ENCODE measurements at regions of chr3 and their contacts with region 1.

Region 1: DNA sequence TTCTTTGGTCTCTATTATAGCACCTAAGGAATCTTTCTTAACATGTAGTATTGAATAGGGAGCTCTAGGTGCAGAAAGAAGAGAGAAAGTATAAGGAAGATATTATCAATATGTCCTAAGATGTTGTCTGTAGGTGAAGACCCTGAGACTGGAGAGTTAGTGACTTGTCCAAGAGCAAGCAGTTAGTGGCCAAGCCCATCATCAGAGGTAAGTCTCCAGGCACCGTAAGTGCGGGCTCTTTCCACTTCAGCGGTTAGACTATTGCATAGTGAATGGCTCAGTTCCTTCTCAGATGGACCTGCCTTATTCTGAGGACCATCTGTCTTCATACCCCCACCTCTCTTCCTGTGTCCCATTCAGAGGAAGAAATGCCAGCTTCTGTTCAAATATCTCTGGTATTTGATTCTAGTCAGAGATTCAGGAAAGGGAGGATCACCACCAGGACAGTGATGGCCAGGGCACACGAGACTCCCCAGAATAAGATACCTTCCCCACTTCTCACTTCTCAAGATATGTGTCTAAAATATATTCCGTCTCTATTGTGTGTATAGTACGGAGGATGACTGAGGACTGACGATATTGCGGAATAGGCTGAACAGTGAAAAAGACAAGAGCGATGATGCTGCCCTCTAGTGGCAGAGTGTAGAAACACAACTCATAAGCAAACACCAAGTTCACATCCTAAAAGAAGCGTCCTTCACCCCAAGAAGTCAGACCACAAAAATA is 19.1 kb upstream of the ADGRG7 start:
- DNase-seq: peak in 1 of 2 donors; percentile 58
- ATAC-seq: peak; percentile 53 to 87 (median 78)
- H3K4me3 ChIP-seq: peak overlapping the region in 1 of 10 donors; percentile 8
- H3K27ac ChIP-seq: no peak overlapping the region
- H3K4me1 ChIP-seq: peaks cover 0 to 5% (median 0%) of the 10 kb centered on the region in 9 donors
- H3K27me3 ChIP-seq: no peaks in the 10 kb centered on the region
- CTCF ChIP-seq: peak; percentile 78 to 96 (median 90)

Region 2: DNA sequence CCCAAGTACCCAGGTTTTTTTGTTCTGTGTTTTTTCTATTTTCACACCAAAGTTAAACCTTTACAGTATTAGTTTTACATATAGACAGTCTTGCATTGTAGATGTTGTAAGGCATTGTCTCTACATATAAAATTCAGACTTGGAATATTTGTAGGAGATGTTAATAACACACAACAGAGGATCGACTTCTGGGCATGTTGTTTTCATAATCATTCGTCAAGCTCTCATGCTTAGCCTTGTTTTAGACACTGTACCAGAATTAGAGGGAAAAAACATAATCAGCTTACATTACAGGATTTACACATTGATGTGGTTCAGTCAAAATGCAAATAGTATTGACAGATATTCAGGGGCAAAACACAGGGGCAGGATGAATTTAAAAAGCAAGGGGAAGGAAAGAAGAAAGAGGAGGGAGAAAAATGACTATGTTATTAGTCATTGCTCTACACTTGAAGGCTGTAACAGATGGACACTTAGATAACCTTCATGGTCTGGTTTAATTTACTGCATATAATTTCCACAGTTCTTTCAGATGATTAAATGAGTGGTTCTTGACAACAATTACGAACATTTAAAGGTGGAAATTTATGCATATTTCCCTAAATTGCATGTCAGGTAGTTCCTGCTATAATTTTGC is 765.2 kb before region 1 on chr3:
- intact Hi-C with region 1: loop called in 6 of 10 experiments (anchors 5 kb)
- DNase-seq: no peak
- ATAC-seq: no peak
- H3K4me3 ChIP-seq: no peak overlapping the region
- H3K27ac ChIP-seq: no peak overlapping the region
- H3K4me1 ChIP-seq: no peaks in the 10 kb centered on the region
- H3K27me3 ChIP-seq: no peaks in the 10 kb centered on the region
- CTCF ChIP-seq: no peak

Region 3: DNA sequence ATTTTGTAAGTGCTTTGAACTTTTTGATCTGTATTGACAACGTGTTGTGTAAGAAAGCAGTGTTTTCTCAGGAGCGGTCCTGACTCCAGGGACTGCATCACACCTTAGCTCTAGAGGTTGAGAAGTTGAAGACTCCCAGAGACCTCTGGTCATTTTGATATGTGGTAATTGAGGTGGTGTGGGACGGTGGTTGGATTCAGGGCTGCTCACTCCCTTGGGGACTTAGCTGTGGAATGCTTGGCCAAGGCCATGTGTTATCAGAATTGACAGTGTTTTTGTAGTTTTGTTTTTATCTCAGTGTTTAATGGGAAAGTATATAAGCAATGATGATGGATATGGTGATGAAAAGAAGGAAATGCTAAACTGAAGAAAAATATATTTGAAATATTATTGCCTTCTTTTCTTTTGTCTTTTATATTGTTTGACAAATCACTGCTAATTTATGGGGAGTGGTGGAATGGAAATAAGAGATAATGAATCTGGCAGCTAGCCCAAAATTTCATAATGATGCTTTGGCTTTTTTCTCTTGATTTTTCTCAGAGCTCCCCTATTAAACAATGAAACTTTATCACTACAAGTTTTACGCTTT is 756.6 kb before region 1 on chr3:
- intact Hi-C with region 1: loop called in 6 of 10 experiments (anchors 5 kb)
- DNase-seq: no peak
- ATAC-seq: no peak
- H3K4me3 ChIP-seq: no peak overlapping the region
- H3K27ac ChIP-seq: peak overlapping the region in 7 of 10 donors; percentile 5 to 62 (median 25)
- H3K4me1 ChIP-seq: peaks cover 0 to 47% (median 23%) of the 10 kb centered on the region in 9 donors
- H3K27me3 ChIP-seq: no peaks in the 10 kb centered on the region
- CTCF ChIP-seq: no peak

Region 4: GRCh38 chr3:100311011-100311410 is 279.3 kb before region 1 on chr3:
- intact Hi-C with region 1: loop called in 8 of 10 experiments (anchors 2 to 5 kb)
- DNase-seq: no peak
- ATAC-seq: no peak
- H3K4me3 ChIP-seq: no peak overlapping the region
- H3K27ac ChIP-seq: no peak overlapping the region
- H3K4me1 ChIP-seq: peaks cover 0 to 3% (median 0%) of the 10 kb centered on the region in 9 donors
- H3K27me3 ChIP-seq: no peaks in the 10 kb centered on the region
- CTCF ChIP-seq: no peak

Region 5: GRCh38 chr3:100316641-100317069 is 273.6 kb before region 1 on chr3:
- intact Hi-C with region 1: loop called in 8 of 10 experiments (anchors 2 to 5 kb)
- DNase-seq: peak in 1 of 2 donors; percentile 44
- ATAC-seq: peak in 5 of 8 donors; percentile 61 to 86 (median 71)
- H3K4me3 ChIP-seq: no peak overlapping the region
- H3K27ac ChIP-seq: no peak overlapping the region
- H3K4me1 ChIP-seq: peaks cover 0 to 5% (median 0%) of the 10 kb centered on the region in 9 donors
- H3K27me3 ChIP-seq: no peaks in the 10 kb centered on the region
- CTCF ChIP-seq: peak; percentile 26 to 76 (median 68)

Region 6: DNA sequence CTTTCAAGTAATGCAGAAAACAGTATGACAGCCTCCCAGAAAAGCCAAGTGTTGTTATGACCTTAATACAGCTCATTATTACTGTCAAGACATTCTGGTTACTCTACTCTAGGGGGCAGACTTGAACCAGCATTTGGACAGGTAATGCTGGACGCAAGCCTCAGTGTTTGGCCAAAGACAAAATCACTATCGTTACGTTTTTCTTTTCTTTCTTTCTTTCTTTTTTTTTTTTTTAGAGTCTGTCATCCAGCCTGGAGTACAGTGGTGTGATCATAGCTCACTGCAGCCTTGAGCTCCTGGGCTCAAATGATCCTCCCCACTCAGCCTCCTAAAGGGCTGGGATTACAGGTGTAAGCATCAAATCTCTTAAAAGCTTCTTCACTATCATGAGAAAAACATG is 127.3 kb before region 1 on chr3:
- intact Hi-C with region 1: loop called in 9 of 10 experiments (anchors 1 to 5 kb)
- DNase-seq: peak in 1 of 2 donors; percentile 35
- ATAC-seq: peak in 7 of 8 donors; percentile 71 to 81 (median 75)
- H3K4me3 ChIP-seq: no peak overlapping the region
- H3K27ac ChIP-seq: no peak overlapping the region
- H3K4me1 ChIP-seq: peaks cover 0 to 7% (median 0%) of the 10 kb centered on the region in 9 donors
- H3K27me3 ChIP-seq: no peaks in the 10 kb centered on the region
- CTCF ChIP-seq: peak; percentile 33 to 78 (median 69)

Measured in heart right ventricle (tissue), 16 donors.